Pancreas (tissue), 10 donors: ENCODE measurements at regions of chr4 and their contacts with region 1.

Region 1: DNA sequence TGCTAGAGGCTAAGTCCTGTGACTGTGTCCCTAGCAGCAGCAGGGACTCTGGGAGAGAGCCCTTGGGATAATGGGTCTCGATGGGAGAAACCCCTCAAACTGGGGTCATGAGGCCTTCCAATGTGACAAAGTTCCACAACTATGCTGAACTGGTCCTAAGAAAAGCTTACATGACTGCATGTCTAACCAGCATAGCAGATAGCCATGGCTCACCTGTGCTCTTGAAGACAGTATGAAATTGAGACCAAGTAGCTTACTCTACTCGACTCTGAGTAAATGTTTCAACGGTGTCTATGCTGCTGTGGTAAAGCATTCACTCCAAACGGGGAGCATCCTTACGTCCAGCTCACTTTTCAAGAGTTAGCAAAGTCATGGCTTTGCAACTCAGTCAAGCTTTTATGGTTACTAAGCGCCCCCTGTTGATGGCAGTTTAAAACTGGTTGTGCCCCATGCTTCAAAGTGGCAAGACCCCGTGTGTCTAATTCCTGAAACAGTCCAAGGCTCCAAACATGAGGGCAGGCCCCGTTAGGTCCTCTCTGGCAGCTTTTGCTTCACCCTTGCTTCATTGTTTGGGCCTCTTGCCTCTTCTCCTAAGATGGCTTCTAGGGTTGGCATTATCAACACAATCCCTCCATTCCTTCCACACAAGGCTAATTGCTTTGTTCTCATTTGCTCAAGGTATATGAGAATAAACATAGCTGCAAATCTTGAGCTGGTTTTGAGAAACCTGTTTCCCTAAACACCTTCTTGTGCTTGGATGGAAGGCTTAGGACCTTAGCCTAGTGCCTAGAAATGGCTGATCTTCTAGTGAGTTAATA is 46.6 kb downstream of the CCNG2 start:
- DNase-seq: peak in 5 of 6 donors; percentile 42 to 73 (median 56)
- ATAC-seq: peak; percentile 63 to 96 (median 92)
- H3K4me3 ChIP-seq: no peak overlapping the region
- H3K27ac ChIP-seq: no peak overlapping the region
- H3K4me1 ChIP-seq: no peaks in the 10 kb centered on the region
- H3K27me3 ChIP-seq: no peaks in the 10 kb centered on the region
- CTCF ChIP-seq: peak; percentile 33 to 58 (median 52)

Region 2: DNA sequence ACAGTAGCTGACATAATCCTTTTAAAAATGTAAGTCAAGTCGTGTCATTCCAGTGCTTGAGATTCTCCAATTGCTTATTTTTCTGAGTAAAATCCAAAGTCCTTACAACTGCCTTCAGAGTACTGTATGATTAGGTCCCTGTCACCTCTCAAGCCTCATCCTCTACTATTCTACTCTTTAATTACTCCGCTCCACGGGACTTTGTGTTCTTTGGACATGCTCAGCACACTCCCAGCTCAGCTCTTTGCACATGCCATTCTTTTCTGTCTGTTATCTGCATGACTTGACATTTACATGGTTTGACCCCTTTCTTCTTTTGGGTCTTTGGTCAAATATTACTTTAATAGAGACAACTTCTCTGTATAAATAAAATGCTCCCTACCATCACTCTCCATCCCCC is 937.0 kb before region 1 on chr4:
- intact Hi-C with region 1: no loop called
- DNase-seq: no peak
- ATAC-seq: no peak
- H3K4me3 ChIP-seq: no peak overlapping the region
- H3K27ac ChIP-seq: no peak overlapping the region
- H3K4me1 ChIP-seq: no peaks in the 10 kb centered on the region
- H3K27me3 ChIP-seq: no peaks in the 10 kb centered on the region
- CTCF ChIP-seq: no peak

Region 3: DNA sequence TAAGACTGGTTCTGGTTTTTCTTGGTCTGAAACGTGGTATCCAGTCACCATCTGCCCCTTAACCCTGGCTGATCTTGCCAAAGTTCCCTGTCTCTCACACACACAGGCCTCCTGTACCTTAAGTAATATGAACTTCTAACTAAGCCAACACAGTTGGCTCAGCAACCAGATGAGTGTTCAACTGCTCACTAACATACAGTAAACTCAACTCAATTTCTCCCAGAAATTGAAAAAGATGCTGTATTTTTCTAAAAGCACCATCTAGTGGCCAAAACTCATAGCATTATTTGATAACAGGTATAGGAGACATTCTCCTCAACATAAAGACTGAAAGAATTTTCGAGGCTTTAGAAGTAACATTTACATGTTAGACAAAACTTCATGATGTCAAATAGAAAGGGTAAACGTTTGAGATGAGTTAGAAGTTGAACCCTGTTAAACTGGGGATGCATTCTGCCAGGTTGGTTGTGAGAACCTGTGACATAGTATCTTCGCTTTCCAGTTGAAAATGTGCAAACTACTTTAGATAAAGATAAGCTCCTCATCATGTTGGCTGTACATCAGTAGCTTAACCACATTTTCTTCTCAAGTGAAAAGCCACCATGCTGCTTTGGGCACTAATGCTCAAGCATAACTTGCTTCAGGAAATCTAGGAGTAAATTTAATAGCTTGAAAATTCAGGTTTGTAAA is 159.0 kb before region 1 on chr4:
- intact Hi-C with region 1: loop called in 1 of 3 experiments (anchors 10 kb)
- DNase-seq: no peak
- ATAC-seq: peak; percentile 29 to 56 (median 56)
- H3K4me3 ChIP-seq: no peak overlapping the region
- H3K27ac ChIP-seq: no peak overlapping the region
- H3K4me1 ChIP-seq: no peaks in the 10 kb centered on the region
- H3K27me3 ChIP-seq: no peaks in the 10 kb centered on the region
- CTCF ChIP-seq: peak; percentile 21 to 39 (median 28)

Region 4: GRCh38 chr4:77126809-77127208 is 76.8 kb before region 1 on chr4:
- intact Hi-C with region 1: loop called in 1 of 3 experiments (anchors 10 kb)
- DNase-seq: no peak
- ATAC-seq: peak in 2 of 4 donors; percentile 56 to 75
- H3K4me3 ChIP-seq: no peak overlapping the region
- H3K27ac ChIP-seq: no peak overlapping the region
- H3K4me1 ChIP-seq: no peaks in the 10 kb centered on the region
- H3K27me3 ChIP-seq: no peaks in the 10 kb centered on the region
- CTCF ChIP-seq: no peak